Aorta (tissue), 5 donors: ENCODE measurements at regions of chr18 and their contacts with region 1.

Region 1: DNA sequence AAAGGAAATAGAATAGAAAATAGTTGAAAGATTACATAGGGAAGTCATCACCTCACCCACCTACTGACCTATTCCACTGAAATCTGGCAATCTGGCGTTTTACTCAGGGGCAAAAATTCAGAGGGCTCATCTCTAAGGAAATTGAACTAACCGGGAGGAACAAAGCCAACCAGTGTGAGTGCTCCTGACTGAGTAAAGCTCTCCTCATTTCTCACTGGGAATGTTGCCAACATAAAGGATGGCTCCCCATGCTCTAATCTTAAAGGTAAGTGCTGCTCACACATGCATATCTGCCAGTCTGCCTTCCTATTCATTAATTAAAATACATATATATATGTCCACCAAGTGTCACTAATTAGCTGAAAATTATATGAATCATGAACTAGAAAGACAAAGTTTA is 13.5 kb upstream of the DOK6 start:
- DNase-seq: no peak
- ATAC-seq: no peak
- H3K4me3 ChIP-seq: no peak overlapping the region
- H3K27ac ChIP-seq: no peak overlapping the region
- H3K4me1 ChIP-seq: no peaks in the 10 kb centered on the region
- H3K27me3 ChIP-seq: no peaks in the 10 kb centered on the region

Region 2: DNA sequence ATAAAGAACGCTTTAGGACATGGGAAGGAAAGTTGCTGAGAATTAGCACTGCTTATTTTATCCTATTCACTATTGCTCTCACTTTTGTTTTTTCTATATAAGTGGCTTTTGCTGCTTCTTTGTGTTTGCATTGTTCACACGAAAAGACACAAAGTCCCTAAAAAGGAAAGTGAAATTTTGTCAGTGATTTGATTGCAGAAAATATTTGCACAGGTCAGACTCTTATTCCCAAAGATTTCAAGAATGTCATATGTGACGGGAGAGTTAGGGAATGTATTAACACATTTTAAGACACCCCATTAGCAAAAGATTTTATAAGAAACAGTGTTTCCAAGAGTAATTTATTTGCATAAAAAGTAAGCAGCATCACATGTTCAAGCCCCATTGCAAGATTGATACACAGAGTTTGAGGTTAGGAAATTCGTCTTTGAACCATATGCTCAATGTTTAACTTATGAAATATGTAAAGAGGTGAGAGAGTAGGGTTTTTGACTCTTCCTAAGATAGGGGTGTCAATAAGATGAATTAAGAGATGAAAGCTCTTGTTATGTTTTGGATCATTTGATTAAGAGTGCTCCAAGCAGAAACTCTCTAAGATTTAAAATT is 532.3 kb before region 1 on chr18:
- intact Hi-C with region 1: no loop called
- DNase-seq: no peak
- ATAC-seq: no peak
- H3K4me3 ChIP-seq: no peak overlapping the region
- H3K27ac ChIP-seq: no peak overlapping the region
- H3K4me1 ChIP-seq: no peaks in the 10 kb centered on the region
- H3K27me3 ChIP-seq: no peaks in the 10 kb centered on the region

Region 3: DNA sequence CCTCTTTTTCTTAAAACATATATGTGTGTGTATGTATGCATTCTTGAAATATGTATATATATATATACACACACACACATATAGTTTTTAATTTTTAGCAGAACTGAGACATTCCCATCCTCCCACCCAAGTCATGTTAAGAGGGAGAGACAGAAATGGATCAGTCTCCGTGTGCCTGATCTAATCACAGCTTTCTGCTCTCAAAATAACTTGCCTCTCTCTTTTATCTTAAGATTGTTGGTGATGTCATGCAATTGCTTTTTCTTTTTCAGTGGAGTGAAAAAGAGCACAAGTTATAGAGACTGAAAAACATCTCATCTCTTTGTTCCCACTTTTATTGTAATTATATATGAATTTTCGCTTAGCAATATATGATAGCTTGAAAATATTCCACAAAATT is 266.4 kb before region 1 on chr18:
- intact Hi-C with region 1: no loop called
- DNase-seq: no peak
- ATAC-seq: no peak
- H3K4me3 ChIP-seq: no peak overlapping the region
- H3K27ac ChIP-seq: no peak overlapping the region
- H3K4me1 ChIP-seq: no peaks in the 10 kb centered on the region
- H3K27me3 ChIP-seq: no peaks in the 10 kb centered on the region

Region 4: DNA sequence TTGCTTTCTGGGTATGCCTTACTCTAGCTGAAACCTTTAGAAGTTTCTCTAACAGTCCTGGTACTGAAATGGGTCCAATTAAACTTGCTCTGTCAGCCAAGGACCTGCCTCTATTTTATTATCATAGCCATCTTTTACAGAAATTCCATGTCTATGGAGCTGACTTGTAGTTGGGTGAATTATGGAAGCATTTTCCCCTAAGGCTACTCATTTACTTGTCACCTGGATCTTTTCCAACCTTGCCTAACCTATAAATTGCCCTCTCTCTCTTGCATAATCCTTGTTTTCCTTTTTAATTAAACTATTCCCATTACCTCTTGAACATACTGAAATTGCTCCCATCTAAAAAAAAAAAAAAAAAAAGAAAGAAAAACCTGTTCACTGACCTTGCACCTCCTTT is 61.1 kb before region 1 on chr18:
- intact Hi-C with region 1: no loop called
- DNase-seq: no peak
- ATAC-seq: no peak
- H3K4me3 ChIP-seq: no peak overlapping the region
- H3K27ac ChIP-seq: no peak overlapping the region
- H3K4me1 ChIP-seq: no peaks in the 10 kb centered on the region
- H3K27me3 ChIP-seq: no peaks in the 10 kb centered on the region

Region 5: GRCh38 chr18:69411199-69411598 is 24.0 kb after region 1 on chr18:
- intact Hi-C with region 1: loop called in 1 of 2 experiments (anchors 1 kb)
- DNase-seq: no peak
- ATAC-seq: no peak
- H3K4me3 ChIP-seq: no peak overlapping the region
- H3K27ac ChIP-seq: no peak overlapping the region
- H3K4me1 ChIP-seq: no peaks in the 10 kb centered on the region
- H3K27me3 ChIP-seq: no peaks in the 10 kb centered on the region

Region 6: GRCh38 chr18:69528435-69528834 is 141.2 kb after region 1 on chr18:
- intact Hi-C with region 1: no loop called
- DNase-seq: no peak
- ATAC-seq: no peak
- H3K4me3 ChIP-seq: no peak overlapping the region
- H3K27ac ChIP-seq: no peak overlapping the region
- H3K4me1 ChIP-seq: no peaks in the 10 kb centered on the region
- H3K27me3 ChIP-seq: no peaks in the 10 kb centered on the region

Region 7: GRCh38 chr18:70082430-70082829 is 695.2 kb after region 1 on chr18:
- intact Hi-C with region 1: loop called in 1 of 2 experiments (anchors 10 kb)
- DNase-seq: no peak
- ATAC-seq: no peak
- H3K4me3 ChIP-seq: no peak overlapping the region
- H3K27ac ChIP-seq: no peak overlapping the region
- H3K4me1 ChIP-seq: no peaks in the 10 kb centered on the region
- H3K27me3 ChIP-seq: no peaks in the 10 kb centered on the region